ENCODE measurements at regions of chr17 and their contacts with region 1.

Region 1: DNA sequence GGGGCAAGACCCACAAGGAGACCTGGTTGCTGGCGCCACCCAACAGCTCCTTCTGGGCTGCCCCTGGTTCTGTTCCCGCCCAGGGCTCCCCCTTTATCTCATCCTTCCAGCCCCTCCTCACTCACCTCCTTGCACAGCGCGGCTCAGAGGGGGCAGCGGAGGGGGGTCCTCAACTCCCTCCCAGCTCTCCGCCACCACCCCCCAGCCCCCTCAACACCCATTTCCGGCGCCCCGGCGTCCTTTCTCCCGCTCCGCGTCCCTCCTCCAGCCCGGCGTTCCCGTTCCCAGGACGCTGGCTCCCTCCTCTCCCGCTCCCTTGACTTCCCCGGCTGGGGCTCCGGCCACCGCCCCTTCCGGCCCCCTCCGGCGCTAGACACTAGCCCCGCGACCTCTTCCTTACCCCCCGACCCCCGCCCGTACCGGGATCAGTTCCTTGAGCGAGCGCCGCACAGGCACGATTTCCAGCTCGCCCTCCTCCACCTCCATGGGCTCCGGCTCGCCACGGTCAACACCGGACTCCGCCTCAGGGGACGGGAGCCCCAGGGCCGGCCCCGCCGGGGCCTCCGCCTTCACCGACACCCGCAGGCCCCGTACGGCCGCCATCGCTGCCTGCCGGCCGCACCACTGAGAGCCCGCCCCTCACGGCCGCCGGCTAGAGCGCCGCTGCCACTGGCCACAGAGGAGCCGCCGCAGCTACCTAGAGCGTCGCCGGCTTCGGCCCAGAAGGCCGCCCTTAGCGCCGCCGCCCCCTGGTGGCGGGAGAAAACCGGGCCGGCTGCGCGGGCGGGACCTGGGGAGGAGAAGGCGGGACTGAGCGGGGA is at the start of gene NCBP3:
- DNase-seq: peak; percentile 91
- H3K4me3 Mint-ChIP-seq: peak within 1 kb of the TSS; percentile 94
- H3K27ac Mint-ChIP-seq: peak within 1 kb of the TSS; percentile 90
- H3K4me1 Mint-ChIP-seq: peaks cover 22% of the 10 kb centered on the region
- H3K27me3 Mint-ChIP-seq: no peaks in the 10 kb centered on the region
- total RNA-seq, gene NCBP3: 33.9 to 40.4 TPM

Region 2: DNA sequence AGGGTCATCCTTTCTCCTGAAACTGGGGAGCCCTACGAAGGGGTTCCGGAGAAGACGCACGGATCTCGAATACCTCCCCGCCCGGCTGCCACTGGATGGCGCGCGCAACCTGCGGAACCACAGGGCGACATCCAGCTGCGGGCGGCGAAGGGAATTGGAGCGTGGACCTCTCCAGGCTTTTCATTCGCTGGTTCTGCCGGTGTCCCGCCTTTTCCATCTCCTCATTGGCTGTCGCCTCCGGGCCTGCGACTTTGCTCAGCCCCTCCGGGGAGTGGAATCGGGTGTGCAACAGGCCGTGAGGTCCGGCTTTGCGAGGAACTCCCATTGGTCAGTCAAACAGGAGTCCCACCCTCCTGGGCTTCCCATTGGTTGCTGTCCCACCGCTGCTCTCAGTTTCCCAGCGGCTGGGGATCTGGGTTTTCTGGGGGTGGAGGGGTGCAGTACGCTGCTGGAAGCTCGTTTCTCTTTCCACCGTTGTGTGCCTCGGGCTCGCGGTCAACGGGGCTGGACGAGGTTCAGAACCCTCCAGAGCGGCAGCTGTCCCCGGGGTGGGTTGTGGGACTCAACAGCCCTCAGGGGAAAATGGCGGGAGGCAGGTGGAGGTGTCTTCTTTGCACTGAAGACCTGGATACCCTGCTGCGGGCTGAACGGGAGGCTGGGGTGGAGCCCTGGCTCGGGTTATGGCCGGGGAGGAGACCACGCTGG is 796.9 kb before region 1 on chr17:
- CTCF ChIA-PET with region 1: no interaction called
- intact Hi-C with region 1: loop called (anchors 5 kb)
- DNase-seq: peak; percentile 97
- H3K4me3 Mint-ChIP-seq: peak overlapping the region; percentile 91
- H3K27ac Mint-ChIP-seq: peak overlapping the region; percentile 87
- H3K4me1 Mint-ChIP-seq: peaks cover 10% of the 10 kb centered on the region
- H3K27me3 Mint-ChIP-seq: peaks cover 3% of the 10 kb centered on the region

Region 3: DNA sequence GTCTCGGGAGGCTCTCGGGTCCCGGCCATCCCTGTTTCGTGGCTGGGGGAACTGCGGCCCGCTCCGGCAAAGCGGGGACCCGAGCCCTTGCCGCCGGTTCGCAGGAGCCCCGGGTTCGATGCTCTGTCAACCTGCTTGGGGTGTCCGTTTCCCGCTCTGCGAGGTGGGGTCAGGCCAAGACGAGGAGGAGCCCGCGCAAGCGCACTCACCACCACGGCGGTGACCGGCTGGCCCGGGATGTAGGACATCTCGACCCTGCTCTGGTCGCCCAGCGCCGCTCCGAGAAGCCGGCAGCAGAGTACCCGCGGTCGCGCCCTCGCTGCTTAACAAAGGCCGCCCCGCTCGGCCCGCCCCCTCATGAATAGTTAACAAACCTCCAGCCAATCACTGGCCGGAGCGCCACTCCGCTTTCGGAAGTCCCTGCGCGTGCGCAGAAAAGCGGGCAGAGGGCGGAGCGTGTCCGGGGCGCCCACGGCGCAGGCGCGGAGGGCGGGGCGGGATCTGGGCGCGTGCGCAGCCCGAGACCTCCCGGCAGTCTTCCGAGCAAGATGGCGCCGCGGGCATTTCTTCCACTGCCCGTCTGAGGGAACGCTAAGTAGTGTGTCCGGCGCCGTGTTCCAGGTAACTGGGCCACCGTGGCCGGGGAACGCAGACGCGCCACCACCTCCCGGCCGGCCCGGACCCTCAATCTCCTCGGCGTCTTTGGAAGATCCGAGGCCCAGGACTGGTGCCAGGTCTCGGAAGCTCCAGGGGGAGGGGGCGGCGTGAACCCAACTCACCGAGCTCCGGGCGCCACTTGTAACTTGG is 177.3 kb before region 1 on chr17 and contains the starts of genes EMC6 and TAX1BP3:
- CTCF ChIA-PET with region 1: no interaction called
- intact Hi-C with region 1: loop called (anchors 1 kb)
- DNase-seq: peak; percentile 98
- H3K4me3 Mint-ChIP-seq: peak within 1 kb of the TSS; percentile 93
- H3K27ac Mint-ChIP-seq: peak within 1 kb of the TSS; percentile 79
- H3K4me1 Mint-ChIP-seq: peaks cover 14% of the 10 kb centered on the region
- H3K27me3 Mint-ChIP-seq: no peaks in the 10 kb centered on the region
- total RNA-seq, gene EMC6: 41.8 to 44.0 TPM
- total RNA-seq, gene TAX1BP3: 17.7 to 19.3 TPM

Region 4: GRCh38 chr17:3710951-3711383 is 134.9 kb before region 1 on chr17:
- CTCF ChIA-PET with region 1: interaction called, 3 read pairs
- intact Hi-C with region 1: loop called (anchors 1 kb)
- DNase-seq: peak; percentile 89
- H3K4me3 Mint-ChIP-seq: no peak overlapping the region
- H3K27ac Mint-ChIP-seq: peak overlapping the region; percentile 87
- H3K4me1 Mint-ChIP-seq: peaks cover 46% of the 10 kb centered on the region
- H3K27me3 Mint-ChIP-seq: no peaks in the 10 kb centered on the region

Region 5: DNA sequence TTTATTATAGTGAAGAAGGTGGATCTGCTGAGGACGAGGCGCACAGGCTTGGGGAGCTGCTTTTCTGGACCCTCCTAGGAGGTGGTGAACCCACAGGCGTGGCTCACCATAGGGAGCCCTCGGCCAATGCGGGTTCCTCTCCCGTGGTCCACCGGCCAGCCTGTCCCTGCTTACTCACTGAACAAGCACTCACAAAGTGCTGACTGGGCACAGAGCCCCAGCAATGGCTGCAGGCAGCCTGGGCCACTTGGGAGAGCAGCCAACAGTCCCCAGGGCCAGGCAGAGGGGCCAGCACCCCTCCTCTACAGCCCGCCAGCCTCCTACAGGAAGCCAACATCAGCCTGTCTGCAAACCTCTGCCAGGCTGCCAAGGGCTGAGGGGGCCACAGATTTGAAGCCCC is 19.3 kb after region 1 on chr17:
- CTCF ChIA-PET with region 1: interaction called, 18 read pairs
- intact Hi-C with region 1: no loop called
- DNase-seq: no peak
- H3K4me3 Mint-ChIP-seq: no peak overlapping the region
- H3K27ac Mint-ChIP-seq: no peak overlapping the region
- H3K4me1 Mint-ChIP-seq: no peaks in the 10 kb centered on the region
- H3K27me3 Mint-ChIP-seq: no peaks in the 10 kb centered on the region

Region 6: DNA sequence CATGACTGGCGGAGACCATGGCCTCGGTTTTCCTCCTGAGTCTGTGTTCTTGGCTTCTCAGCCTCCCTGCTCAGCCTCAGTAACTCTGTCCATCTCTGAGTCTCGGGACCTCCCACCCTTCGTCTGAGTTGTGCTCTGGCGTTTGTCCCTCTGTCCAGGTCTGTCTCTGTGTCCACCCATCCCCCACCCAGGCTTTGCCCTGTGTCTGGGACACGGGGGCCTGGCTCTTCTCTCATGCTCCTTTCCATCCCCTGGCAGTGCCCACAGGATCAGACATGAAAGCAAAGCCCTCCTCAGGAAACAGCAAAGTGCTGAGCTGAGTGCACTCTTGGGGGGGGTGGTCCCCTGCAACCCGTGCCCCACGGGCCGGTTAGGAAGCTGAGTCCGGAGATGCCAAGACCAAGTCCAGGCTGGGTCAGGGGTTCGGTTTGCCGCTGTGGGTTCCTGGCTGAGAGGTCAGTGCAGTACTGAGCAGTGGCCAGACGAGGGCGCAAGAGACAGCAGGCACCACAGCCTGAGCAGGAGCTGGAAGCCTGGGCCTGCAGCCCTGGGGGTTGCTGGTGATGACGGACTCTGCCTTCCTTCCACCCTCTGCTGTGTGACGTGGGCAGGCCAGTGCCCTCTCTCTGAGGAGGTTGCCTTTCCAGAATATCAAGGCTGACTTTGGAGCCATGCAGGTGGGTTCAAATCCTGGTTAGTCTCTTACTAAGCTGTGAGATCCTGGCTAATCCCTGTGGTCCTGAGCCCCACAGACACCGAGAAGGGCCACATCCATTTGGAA is 67.9 kb after region 1 on chr17:
- CTCF ChIA-PET with region 1: interaction called, 10 read pairs
- intact Hi-C with region 1: loop called (anchors 1 kb)
- DNase-seq: peak; percentile 90
- H3K4me3 Mint-ChIP-seq: no peak overlapping the region
- H3K27ac Mint-ChIP-seq: no peak overlapping the region
- H3K4me1 Mint-ChIP-seq: peaks cover 50% of the 10 kb centered on the region
- H3K27me3 Mint-ChIP-seq: no peaks in the 10 kb centered on the region